Endothelial cell of umbilical vein (primary cell): ENCODE measurements at regions of chr6 and their contacts with region 1.

Region 1: DNA sequence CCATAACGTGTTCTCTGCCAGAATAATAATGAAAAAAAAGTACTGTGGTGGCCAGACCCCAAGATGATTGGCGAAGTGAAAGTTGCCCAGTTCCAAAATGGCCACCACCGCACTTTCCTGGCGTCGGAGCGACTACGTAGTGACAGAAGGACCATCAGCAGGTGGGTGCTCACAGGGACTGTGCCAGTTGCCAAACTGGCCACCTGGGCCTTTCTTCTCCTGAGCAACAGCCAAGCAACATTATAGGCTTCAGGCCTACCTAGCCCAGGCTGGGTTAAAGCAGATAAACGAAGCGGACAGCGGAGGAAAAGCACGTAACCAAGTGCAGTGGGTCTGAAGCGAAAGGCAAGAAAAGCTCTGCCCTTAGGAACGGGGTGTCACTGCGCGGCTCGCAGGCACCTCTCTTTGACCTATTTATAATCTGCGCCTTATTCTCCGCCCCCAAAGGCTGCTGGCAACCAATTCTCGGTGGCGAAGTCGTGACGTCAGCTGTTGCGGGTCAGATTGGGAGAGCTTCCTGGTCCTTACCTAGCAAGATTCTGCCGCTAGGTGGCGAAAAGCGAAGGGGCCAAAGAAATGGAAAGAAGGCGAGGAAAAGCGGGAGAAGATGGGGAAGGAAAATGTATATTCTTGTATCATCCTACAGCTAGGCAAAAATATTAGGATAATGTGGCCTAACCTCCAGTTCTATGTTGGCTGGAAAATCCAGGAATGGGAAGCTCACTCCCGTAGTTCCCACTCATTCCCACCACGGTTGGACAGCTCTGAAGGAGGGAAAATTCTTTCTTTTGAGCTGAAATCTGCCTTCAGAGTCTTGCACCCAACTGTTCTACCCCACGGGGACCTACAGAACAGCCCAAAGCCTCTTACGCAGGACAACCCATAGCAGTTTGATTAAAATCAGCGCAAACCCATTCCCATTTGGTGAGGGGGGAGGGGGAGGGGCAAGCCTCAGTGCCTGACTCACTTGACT is 6.9 kb upstream of the MOG start:
- DNase-seq: peak; percentile 96
- H3K4me3 ChIP-seq: peak overlapping the region; percentile 16 to 66 (median 54)
- H3K27ac ChIP-seq: peak overlapping the region; percentile 41
- H3K4me1 ChIP-seq: peaks cover 4% of the 10 kb centered on the region
- H3K27me3 ChIP-seq: peaks cover 4 to 8% of the 10 kb centered on the region in 2 experiments
- CTCF ChIP-seq: peak; percentile 84 to 98
- POLR2A ChIP-seq: no peak

Region 2: GRCh38 chr6:29399525-29399924 is 250.5 kb before region 1 on chr6:
- CTCF ChIA-PET with region 1: no interaction called
- POLR2A ChIA-PET with region 1: no interaction called
- dilution Hi-C with region 1: no loop called
- intact Hi-C with region 1: no loop called
- DNase-seq: no peak
- H3K4me3 ChIP-seq: no peak overlapping the region
- H3K27ac ChIP-seq: no peak overlapping the region
- H3K4me1 ChIP-seq: no peaks in the 10 kb centered on the region
- H3K27me3 ChIP-seq: no peaks in the 10 kb centered on the region
- CTCF ChIP-seq: no peak
- POLR2A ChIP-seq: no peak

Region 3: DNA sequence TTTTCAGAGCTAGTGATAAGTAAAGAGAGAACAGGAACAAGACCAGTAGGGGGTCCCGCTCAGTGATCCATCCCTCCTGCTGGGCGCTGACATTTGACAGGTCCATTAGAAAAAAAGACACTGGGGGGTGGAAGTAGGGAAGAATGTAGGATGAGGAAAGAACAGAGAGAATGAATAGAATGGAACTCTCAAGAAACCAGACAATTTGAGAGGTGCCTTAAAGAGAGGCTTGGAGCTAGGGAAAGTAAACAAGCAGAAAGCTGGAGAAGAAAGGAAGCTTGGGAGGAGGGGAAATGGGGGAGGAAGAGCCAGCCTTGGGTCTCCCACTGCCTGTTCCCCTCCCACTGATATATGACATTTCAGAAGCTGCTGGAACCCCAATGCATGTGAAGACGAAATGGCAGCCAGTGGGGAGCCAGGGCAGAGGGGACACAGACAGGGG is 25.4 kb before region 1 on chr6:
- CTCF ChIA-PET with region 1: interaction called, 23 read pairs
- POLR2A ChIA-PET with region 1: interaction called, 8 read pairs
- dilution Hi-C with region 1: no loop called
- intact Hi-C with region 1: no loop called
- DNase-seq: no peak
- H3K4me3 ChIP-seq: no peak overlapping the region
- H3K27ac ChIP-seq: no peak overlapping the region
- H3K4me1 ChIP-seq: peaks cover 7% of the 10 kb centered on the region
- H3K27me3 ChIP-seq: no peaks in the 10 kb centered on the region
- CTCF ChIP-seq: no peak
- POLR2A ChIP-seq: no peak

Region 4: DNA sequence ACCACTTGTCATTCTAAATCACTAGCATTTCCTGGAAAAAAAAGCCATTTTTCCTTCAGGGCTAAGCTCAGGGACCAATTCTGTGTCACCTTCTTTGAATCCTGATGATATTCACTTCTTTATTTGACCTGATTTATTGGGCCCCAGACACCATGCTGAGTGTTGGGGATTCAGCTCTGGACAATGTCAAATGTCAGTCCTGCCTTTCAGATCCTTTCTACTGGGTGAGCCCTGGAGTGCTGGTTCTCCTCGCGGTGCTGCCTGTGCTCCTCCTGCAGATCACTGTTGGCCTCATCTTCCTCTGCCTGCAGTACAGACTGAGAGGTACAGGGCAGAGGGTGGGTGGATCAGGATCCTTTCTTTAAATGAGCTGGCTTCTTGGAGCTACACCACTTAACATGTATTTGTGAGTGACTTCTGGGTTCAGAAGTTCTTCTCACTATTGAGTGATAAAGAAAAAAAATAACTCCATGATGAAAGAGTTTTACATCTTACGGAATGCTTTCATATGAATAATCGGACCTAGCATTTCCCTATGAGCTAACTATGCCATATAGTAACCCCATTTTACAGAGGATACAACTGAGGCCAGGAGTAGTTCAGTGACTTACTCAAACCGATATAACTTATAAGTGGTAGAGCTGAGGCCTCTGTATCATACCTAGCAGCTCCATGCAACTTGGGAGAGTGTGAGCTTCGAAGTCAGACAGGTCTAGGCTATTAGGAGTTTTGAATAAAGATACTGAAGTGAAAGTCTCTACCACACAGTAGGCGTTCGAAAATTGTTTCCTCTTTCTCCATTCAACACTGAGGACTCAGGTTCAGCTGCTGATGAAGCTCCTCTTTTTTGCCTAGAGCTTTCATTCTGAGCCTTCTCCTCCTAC is 16.2 kb after region 1 on chr6:
- CTCF ChIA-PET with region 1: interaction called, 84 read pairs
- POLR2A ChIA-PET with region 1: no interaction called
- dilution Hi-C with region 1: no loop called
- intact Hi-C with region 1: no loop called
- DNase-seq: no peak
- H3K4me3 ChIP-seq: no peak overlapping the region
- H3K27ac ChIP-seq: no peak overlapping the region
- H3K4me1 ChIP-seq: no peaks in the 10 kb centered on the region
- H3K27me3 ChIP-seq: peaks cover 14 to 27% of the 10 kb centered on the region in 2 experiments
- CTCF ChIP-seq: no peak
- POLR2A ChIP-seq: no peak

Region 5: DNA sequence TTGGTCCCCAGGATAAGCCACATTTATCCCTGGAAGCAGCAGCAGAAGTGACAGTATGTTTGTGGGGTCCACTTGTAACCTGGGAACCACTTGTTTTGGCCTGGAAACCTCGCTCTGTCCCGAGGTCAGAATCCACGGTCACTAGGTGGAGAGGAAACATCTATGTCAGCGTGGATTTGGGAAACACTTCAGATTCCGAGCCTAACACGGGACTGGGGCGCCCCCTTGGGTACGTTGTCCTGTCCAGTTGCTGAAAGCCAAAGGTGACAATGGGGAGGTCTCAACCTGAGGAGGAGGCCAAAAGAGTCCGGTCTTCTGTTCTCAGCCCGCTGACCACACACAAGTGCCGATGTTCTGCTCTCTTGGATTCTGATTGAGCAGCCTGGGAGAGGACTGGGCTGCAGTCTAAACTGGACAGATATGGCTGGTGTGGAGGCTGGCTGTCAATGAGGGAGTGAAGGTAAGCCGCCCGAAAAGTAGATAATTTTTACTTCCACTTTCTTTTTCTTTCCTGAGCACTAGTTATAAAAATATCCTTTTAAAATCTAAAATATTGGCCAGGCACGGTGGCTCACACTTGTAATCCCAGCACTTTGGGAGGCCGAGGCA is 35.8 kb after region 1 on chr6:
- CTCF ChIA-PET with region 1: interaction called, 19 read pairs
- POLR2A ChIA-PET with region 1: no interaction called
- dilution Hi-C with region 1: no loop called
- intact Hi-C with region 1: no loop called
- DNase-seq: no peak
- H3K4me3 ChIP-seq: no peak overlapping the region
- H3K27ac ChIP-seq: no peak overlapping the region
- H3K4me1 ChIP-seq: no peaks in the 10 kb centered on the region
- H3K27me3 ChIP-seq: peaks cover 0 to 8% of the 10 kb centered on the region in 2 experiments
- CTCF ChIP-seq: no peak
- POLR2A ChIP-seq: no peak

Region 6: GRCh38 chr6:29705389-29706231 is 55.6 kb after region 1 on chr6:
- CTCF ChIA-PET with region 1: interaction called, 10 read pairs
- POLR2A ChIA-PET with region 1: no interaction called
- dilution Hi-C with region 1: no loop called
- intact Hi-C with region 1: loop called (anchors 2 kb)
- DNase-seq: peak; percentile 39
- H3K4me3 ChIP-seq: no peak overlapping the region
- H3K27ac ChIP-seq: no peak overlapping the region
- H3K4me1 ChIP-seq: no peaks in the 10 kb centered on the region
- H3K27me3 ChIP-seq: peaks cover 7 to 8% of the 10 kb centered on the region in 2 experiments
- CTCF ChIP-seq: peak; percentile 36 to 40
- POLR2A ChIP-seq: no peak

Region 7: DNA sequence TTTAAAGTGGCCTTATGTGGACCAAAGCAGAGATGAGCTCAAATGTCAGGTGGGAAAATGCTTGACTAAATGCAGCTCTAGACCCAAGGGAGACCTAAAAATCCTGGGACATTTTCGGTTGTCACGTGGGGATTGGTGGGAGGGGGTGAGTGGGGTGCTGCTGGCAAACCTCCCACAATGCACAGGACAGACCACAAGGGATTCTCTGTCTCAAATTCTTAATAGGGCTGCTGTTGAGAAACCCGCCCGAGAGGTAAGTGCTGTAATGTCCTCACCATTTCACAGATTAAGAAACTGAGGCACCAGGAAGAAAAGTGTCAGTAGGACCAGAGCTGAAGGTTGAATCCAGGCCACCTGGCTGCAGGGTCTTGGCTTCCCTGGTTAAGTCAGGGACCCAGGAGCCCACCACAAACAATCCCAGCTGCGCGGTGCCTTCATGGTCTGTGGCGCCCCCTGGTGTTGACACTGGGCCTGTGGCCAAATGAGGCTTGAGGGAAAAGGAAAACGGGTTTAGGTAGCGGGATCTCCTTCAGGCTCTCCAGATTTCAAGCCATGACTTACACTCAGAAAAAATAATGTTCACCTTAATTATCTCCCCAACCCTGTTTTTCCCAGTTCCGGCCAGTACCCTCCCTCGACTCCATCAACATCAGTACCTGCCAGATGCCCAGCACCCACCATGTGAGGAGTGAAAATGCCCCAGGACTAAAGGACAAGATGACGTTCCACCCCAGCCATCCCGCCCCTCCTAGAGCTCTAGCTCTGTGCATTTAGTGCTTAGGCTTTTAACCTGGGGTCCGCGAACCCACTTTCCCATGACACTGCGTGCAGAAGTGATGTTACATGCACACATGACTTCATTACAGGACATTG is 184.8 kb after region 1 on chr6:
- CTCF ChIA-PET with region 1: interaction called, 8 read pairs
- POLR2A ChIA-PET with region 1: no interaction called
- dilution Hi-C with region 1: no loop called
- intact Hi-C with region 1: loop called (anchors 1 kb)
- DNase-seq: peak; percentile 8
- H3K4me3 ChIP-seq: no peak overlapping the region
- H3K27ac ChIP-seq: no peak overlapping the region
- H3K4me1 ChIP-seq: no peaks in the 10 kb centered on the region
- H3K27me3 ChIP-seq: peaks cover 24 to 29% of the 10 kb centered on the region in 2 experiments
- CTCF ChIP-seq: peak; percentile 69 to 82
- POLR2A ChIP-seq: no peak

Region 8: GRCh38 chr6:29989211-29989610 is 339.2 kb after region 1 on chr6:
- CTCF ChIA-PET with region 1: no interaction called
- POLR2A ChIA-PET with region 1: no interaction called
- dilution Hi-C with region 1: no loop called
- intact Hi-C with region 1: no loop called
- DNase-seq: no peak
- H3K4me3 ChIP-seq: no peak overlapping the region
- H3K27ac ChIP-seq: no peak overlapping the region
- H3K4me1 ChIP-seq: no peaks in the 10 kb centered on the region
- H3K27me3 ChIP-seq: peaks cover 11 to 13% of the 10 kb centered on the region in 2 experiments
- CTCF ChIP-seq: no peak
- POLR2A ChIP-seq: no peak

Region 9: DNA sequence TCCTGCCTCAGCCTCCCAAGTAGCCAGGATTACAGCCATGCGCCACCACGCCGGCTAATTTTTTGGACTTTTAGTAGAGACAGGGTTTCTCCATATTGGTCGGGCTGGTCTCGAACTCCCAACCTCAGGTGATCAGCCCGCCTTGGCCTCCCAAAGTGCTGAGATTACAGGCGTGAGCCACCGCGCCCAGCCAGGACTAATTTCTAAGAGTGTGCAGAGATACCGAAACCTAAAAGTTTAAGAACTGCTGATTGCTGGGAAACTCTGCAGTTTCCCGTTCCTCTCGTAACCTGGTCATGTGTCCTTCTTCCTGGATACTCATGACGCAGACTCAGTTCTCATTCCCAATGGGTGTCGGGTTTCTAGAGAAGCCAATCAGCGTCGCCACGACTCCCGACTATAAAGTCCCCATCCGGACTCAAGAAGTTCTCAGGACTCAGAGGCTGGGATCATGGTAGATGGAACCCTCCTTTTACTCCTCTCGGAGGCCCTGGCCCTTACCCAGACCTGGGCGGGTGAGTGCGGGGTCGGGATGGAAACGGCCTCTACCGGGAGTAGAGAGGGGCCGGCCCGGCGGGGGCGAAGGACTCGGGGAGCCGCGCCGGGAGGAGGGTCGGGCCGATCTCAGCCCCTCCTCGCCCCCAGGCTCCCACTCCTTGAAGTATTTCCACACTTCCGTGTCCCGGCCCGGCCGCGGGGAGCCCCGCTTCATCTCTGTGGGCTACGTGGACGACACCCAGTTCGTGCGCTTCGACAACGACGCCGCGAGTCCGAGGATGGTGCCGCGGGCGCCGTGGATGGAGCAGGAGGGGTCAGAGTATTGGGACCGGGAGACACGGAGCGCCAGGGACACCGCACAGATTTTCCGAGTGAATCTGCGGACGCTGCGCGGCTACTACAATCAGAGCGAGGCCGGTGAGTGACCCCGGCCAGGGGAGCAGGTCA is 839.4 kb after region 1 on chr6 and contains the start of gene HLA-E:
- CTCF ChIA-PET with region 1: no interaction called
- POLR2A ChIA-PET with region 1: no interaction called
- dilution Hi-C with region 1: no loop called
- intact Hi-C with region 1: no loop called
- DNase-seq: peak; percentile 99
- H3K4me3 ChIP-seq: peak within 1 kb of the TSS; percentile 76 to 94 (median 92)
- H3K27ac ChIP-seq: peak within 1 kb of the TSS; percentile 92
- H3K4me1 ChIP-seq: peaks cover 20% of the 10 kb centered on the region
- H3K27me3 ChIP-seq: no peaks in the 10 kb centered on the region
- CTCF ChIP-seq: no peak
- POLR2A ChIP-seq: peak; percentile 99
- total RNA-seq, gene HLA-E: 249 and 271 TPM in 2 replicates